Endothelial cell of umbilical vein (primary cell): ENCODE measurements at regions of chr4 and their contacts with region 1.

Region 1: GRCh38 chr4:25439918-25440477 is 62.9 kb downstream of the ANAPC4 start:
- DNase-seq: peak; percentile 71
- H3K4me3 ChIP-seq: no peak overlapping the region
- H3K27ac ChIP-seq: no peak overlapping the region
- H3K4me1 ChIP-seq: peaks cover 6% of the 10 kb centered on the region
- H3K27me3 ChIP-seq: no peaks in the 10 kb centered on the region
- CTCF ChIP-seq: peak; percentile 87 to 93
- POLR2A ChIP-seq: no peak

Region 2: DNA sequence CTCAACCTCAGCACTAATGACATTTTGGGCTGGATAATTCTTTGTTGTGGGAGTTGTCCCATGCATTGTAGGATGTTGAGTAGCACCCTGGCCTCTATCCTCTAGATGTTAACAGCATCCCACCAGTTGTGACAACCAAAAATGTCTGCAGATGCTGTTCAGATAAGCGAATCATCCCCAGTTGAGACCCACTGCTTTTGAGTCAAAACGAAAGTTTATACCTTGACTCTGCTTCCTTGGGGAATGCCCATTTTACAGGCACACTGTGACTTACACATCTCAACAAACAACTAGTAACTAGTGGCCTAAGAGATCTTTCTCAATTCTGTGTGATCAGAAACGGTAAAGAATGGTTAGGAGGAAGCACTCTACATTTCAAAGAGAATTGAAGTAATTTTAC is 316.8 kb before region 1 on chr4:
- CTCF ChIA-PET with region 1: no interaction called
- POLR2A ChIA-PET with region 1: no interaction called
- dilution Hi-C with region 1: no loop called
- intact Hi-C with region 1: no loop called
- DNase-seq: no peak
- H3K4me3 ChIP-seq: no peak overlapping the region
- H3K27ac ChIP-seq: no peak overlapping the region
- H3K4me1 ChIP-seq: no peaks in the 10 kb centered on the region
- H3K27me3 ChIP-seq: no peaks in the 10 kb centered on the region
- CTCF ChIP-seq: no peak
- POLR2A ChIP-seq: no peak

Region 3: DNA sequence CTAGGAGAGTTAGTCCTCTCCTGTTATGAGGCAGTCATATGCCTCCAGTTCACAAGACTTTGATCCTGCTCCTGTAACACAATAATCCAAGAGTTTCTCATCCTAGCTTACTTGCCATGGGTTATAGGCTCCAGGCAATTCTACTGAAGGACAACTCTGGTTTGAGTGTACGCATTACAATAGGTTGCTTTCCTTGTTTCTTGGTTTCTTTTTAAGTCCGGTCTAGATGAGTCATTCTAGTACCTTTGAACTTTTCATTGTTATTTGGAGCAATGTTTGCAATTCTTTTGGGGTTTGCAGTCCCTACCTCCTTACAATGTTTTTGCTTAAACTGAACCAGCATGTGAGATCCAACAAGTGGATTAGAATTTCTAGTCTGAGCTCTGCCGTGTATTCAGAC is 46.2 kb after region 1 on chr4:
- CTCF ChIA-PET with region 1: interaction called, 5 read pairs
- POLR2A ChIA-PET with region 1: no interaction called
- dilution Hi-C with region 1: no loop called
- intact Hi-C with region 1: loop called (anchors 5 kb)
- DNase-seq: peak; percentile 90
- H3K4me3 ChIP-seq: peak overlapping the region in 1 of 3 experiments; percentile 1
- H3K27ac ChIP-seq: peak overlapping the region; percentile 74
- H3K4me1 ChIP-seq: peaks cover 23% of the 10 kb centered on the region
- H3K27me3 ChIP-seq: no peaks in the 10 kb centered on the region
- CTCF ChIP-seq: no peak
- POLR2A ChIP-seq: no peak

Region 4: GRCh38 chr4:25552580-25553271 is 112.7 kb after region 1 on chr4:
- CTCF ChIA-PET with region 1: interaction called, 4 read pairs
- POLR2A ChIA-PET with region 1: no interaction called
- dilution Hi-C with region 1: no loop called
- intact Hi-C with region 1: loop called (anchors 5 kb)
- DNase-seq: peak; percentile 20
- H3K4me3 ChIP-seq: no peak overlapping the region
- H3K27ac ChIP-seq: no peak overlapping the region
- H3K4me1 ChIP-seq: no peaks in the 10 kb centered on the region
- H3K27me3 ChIP-seq: no peaks in the 10 kb centered on the region
- CTCF ChIP-seq: no peak
- POLR2A ChIP-seq: no peak

Region 5: DNA sequence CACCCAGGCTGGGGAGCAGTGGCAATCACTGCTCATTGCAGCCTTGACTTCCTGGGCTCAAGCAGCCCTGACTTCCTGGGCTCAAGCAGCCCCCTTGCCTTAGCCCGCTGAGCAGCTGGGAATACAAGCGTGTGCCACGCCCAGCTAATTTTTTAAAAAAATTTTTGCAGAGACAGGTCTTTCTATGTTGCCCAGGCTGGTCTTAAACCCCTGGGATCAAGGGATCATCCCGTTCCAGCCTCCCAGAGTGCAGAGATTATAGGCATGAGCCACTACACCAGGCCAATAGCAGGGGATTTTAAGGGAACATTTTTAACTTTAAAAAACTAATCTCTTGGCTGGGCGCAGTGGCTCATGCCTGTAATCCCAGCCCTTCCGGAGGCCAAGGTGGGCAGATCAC is 210.3 kb after region 1 on chr4:
- CTCF ChIA-PET with region 1: interaction called, 23 read pairs
- POLR2A ChIA-PET with region 1: no interaction called
- dilution Hi-C with region 1: no loop called
- intact Hi-C with region 1: no loop called
- DNase-seq: no peak
- H3K4me3 ChIP-seq: no peak overlapping the region
- H3K27ac ChIP-seq: no peak overlapping the region
- H3K4me1 ChIP-seq: no peaks in the 10 kb centered on the region
- H3K27me3 ChIP-seq: peaks cover 14 to 16% of the 10 kb centered on the region in 2 experiments
- CTCF ChIP-seq: no peak
- POLR2A ChIP-seq: no peak

Region 6: DNA sequence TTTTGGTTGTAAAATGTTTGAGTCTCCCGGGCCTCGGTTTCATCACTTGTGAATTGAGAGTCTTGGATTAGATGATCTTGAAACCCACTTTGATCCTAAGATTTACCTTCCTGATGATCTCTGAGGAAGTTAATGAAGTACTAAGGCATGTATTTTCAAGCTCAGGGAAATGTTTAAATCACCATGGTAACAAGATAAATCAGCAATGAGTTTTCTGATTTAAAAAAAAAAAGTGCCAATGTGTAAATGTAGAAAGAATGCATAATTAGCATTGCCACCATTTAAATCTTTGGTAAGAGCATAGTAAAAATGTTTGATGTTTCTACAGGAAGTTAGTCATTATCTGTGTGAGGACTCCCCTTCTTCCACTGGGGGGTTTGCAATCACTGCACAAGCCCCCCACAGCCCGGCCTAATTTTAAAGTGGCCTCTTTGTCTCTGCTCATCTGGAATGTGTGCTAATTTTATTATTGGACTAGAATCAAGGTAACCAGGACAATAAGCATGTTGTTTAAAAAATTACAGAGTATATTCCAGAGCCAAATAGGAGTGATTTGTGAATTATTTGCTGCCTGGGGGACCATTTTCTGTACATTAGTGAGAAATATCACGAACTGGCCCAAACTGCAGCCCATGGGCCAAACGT is 309.3 kb after region 1 on chr4:
- CTCF ChIA-PET with region 1: interaction called, 45 read pairs
- POLR2A ChIA-PET with region 1: no interaction called
- dilution Hi-C with region 1: no loop called
- intact Hi-C with region 1: no loop called
- DNase-seq: no peak
- H3K4me3 ChIP-seq: no peak overlapping the region
- H3K27ac ChIP-seq: no peak overlapping the region
- H3K4me1 ChIP-seq: no peaks in the 10 kb centered on the region
- H3K27me3 ChIP-seq: no peaks in the 10 kb centered on the region
- CTCF ChIP-seq: no peak
- POLR2A ChIP-seq: no peak

Region 7: DNA sequence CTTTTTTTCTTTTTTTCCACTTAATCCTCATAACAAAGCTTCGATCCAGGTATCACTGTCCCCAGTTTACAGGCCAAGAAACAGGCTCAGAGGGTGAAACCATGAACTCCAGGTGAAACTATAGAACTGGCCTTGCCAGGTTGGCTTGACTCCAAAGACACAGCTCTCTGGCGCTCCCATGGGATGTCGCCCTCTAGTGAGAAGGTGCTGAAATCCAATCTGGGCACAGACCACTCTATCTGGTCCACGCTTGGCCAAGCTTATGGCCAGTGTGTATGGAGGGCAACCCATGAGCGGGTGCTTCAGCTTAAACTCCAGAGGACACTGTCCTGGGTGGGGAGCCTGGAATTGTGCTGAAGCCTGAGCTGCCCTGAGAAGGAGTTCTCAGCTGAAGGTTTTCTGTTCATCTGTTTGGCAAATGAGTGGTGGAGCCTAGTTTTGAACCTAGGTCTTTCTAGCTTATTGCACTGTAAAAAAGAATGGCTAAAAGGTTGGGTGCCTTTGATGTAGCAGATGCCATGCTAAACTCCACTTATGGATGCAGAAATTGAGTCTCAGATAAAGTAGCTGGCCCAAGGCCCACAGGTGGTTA is 352.3 kb after region 1 on chr4:
- CTCF ChIA-PET with region 1: interaction called, 43 read pairs
- POLR2A ChIA-PET with region 1: no interaction called
- dilution Hi-C with region 1: no loop called
- intact Hi-C with region 1: loop called (anchors 1 kb)
- DNase-seq: peak; percentile 21
- H3K4me3 ChIP-seq: no peak overlapping the region
- H3K27ac ChIP-seq: no peak overlapping the region
- H3K4me1 ChIP-seq: no peaks in the 10 kb centered on the region
- H3K27me3 ChIP-seq: no peaks in the 10 kb centered on the region
- CTCF ChIP-seq: peak; percentile 41 to 46
- POLR2A ChIP-seq: no peak